Heart left ventricle (tissue), 16 donors: ENCODE measurements at regions of chr12 and their contacts with region 1.

Region 1: DNA sequence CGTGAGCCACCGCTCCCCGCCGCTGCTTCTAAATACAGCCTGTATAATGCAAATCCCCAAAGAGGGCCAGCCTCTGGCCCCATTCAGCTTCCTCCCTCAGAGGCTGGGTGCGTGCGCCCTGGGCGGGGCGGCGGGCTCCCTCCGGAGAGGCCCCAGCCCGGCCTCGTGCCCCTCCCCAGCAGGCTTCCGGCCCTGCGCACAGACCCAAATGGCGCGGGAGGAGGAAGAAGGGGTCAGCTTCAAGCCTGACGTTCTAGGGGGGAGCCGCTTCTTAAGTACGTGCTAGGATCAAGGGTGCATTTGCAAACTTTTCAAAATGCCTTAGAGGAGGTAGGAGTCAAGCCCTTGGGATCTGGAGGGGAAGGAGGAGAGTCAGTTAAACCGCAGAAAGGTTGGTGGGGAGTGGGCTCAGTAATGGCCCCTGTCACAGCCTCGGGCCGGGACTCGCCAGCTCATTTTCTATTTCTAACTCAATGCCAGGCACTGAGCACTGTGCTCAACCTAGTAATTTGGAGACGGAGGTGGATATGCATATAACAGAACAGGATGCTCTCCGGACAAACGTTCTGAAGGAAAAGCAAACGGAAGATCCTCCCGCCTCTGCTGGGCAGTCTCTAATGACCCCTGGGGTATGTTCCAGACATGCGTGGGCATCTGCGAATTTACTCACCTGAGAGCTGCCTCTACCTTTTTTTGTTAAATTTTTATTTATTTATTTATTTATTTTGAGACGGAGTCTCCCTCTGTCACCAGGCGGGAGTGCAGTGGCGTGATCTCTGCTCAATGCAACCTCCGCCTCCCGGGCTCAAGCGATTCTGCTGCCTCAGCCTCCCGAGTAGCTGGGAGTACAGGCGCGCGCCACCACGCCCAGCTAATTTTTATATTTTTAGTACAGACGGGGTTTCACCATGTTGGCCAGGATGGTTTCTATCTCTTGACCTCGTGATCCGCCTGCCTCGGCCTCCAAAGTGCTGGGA is 32.3 kb downstream of the NINJ2 start:
- DNase-seq: peak; percentile 62 to 91 (median 83)
- ATAC-seq: peak; percentile 52 to 87 (median 70)
- H3K4me3 ChIP-seq: peak overlapping the region in 9 of 12 donors; percentile 25 to 67 (median 40)
- H3K27ac ChIP-seq: peak overlapping the region; percentile 76 to 93 (median 87)
- H3K4me1 ChIP-seq: peaks cover 0 to 77% (median 44%) of the 10 kb centered on the region in 12 donors
- H3K27me3 ChIP-seq: no peaks in the 10 kb centered on the region
- CTCF ChIP-seq: no peak
- POLR2A ChIP-seq: peak in 1 of 2 donors; percentile 46

Region 2: GRCh38 chr12:106118-106591 is 524.8 kb before region 1 on chr12:
- intact Hi-C with region 1: no loop called
- DNase-seq: peak in 3 of 5 donors; percentile 35 to 60 (median 51)
- ATAC-seq: peak; percentile 40 to 94 (median 58)
- H3K4me3 ChIP-seq: no peak overlapping the region
- H3K27ac ChIP-seq: peak overlapping the region in 7 of 12 donors; percentile 0 to 61 (median 33)
- H3K4me1 ChIP-seq: peaks cover 0 to 33% (median 1%) of the 10 kb centered on the region in 12 donors
- H3K27me3 ChIP-seq: peaks cover 0 to 27% (median 3%) of the 10 kb centered on the region in 9 donors
- CTCF ChIP-seq: peak in 6 of 12 donors; percentile 4 to 29 (median 16)
- POLR2A ChIP-seq: no peak

Region 3: GRCh38 chr12:607526-608001 is 23.4 kb before region 1 on chr12:
- intact Hi-C with region 1: loop called in 1 of 10 experiments (anchors 1 kb)
- DNase-seq: peak; percentile 82 to 88 (median 84)
- ATAC-seq: peak; percentile 63 to 91 (median 64)
- H3K4me3 ChIP-seq: no peak overlapping the region
- H3K27ac ChIP-seq: peak overlapping the region; percentile 65 to 82 (median 76)
- H3K4me1 ChIP-seq: peaks cover 6 to 82% (median 36%) of the 10 kb centered on the region in 12 donors
- H3K27me3 ChIP-seq: no peaks in the 10 kb centered on the region
- CTCF ChIP-seq: no peak
- POLR2A ChIP-seq: no peak

Region 4: DNA sequence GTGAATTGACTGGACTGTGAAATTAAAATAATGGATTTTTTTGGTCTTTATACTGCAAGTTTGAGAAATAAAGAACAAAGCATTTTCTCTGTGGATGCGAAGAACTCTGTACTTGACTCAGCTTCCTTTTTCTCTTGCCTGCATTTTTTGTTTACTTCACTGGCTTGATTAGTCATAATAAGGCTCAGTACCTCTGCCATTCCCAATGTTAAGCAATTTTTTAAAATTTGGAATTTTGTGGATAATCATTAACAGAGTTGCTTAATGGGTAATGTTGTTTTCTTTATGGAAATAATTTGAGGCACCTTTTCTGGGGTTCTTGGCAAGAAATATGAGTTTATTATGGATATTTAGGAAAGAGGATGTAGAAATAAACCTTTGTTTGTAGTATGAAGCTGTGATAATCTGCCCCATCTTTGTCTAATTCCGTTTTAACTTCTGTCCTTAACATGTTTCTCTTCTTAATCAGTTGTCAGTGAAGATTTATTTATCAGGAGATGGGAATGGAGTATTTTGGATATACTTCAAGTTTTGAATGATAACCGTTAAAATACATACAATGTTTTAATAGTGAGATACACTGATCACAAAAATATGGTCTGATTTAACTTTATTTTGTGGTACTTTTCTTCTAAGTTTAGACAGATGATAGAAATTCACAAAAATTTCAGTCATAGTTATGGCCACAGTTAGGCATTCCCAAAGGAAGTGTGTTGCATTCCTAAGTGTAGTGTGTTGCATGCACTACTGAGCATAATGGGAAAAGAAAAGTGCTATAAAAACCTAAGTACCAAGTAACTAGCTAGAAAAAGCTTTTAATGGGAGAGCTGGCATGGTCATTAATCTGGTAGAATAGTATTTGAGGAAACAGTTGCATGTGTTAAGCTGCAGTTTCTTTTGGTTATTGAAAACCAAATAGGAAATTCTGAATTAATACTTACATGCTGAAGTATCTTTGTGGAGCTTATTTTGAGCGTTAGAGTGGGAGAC is 149.1 kb after region 1 on chr12:
- intact Hi-C with region 1: no loop called
- DNase-seq: no peak
- ATAC-seq: peak in 1 of 4 donors; percentile 60
- H3K4me3 ChIP-seq: peak overlapping the region in 2 of 12 donors; percentile 5 to 37
- H3K27ac ChIP-seq: peak overlapping the region in 3 of 12 donors; percentile 11 to 72 (median 15)
- H3K4me1 ChIP-seq: peaks cover 9 to 81% (median 58%) of the 10 kb centered on the region in 12 donors
- H3K27me3 ChIP-seq: no peaks in the 10 kb centered on the region
- CTCF ChIP-seq: no peak
- POLR2A ChIP-seq: no peak

Region 5: GRCh38 chr12:1108276-1108675 is 477.3 kb after region 1 on chr12:
- intact Hi-C with region 1: no loop called
- DNase-seq: no peak
- ATAC-seq: no peak
- H3K4me3 ChIP-seq: no peak overlapping the region
- H3K27ac ChIP-seq: no peak overlapping the region
- H3K4me1 ChIP-seq: peaks cover 0 to 7% (median 0%) of the 10 kb centered on the region in 12 donors
- H3K27me3 ChIP-seq: no peaks in the 10 kb centered on the region
- CTCF ChIP-seq: no peak
- POLR2A ChIP-seq: no peak